ENCODE measurements at regions of chr2 and their contacts with region 1.

Region 1: GRCh38 chr2:176454893-176455811 is 185.9 kb downstream of the MTX2 start:
- DNase-seq: peak; percentile 69
- ATAC-seq: peak; percentile 47

Region 2: GRCh38 chr2:176140513-176141317 is 314.4 kb before region 1 on chr2:
- intact Hi-C with region 1: loop called (anchors 1 kb)
- DNase-seq: no peak
- ATAC-seq: peak; percentile 83

Region 3: GRCh38 chr2:176269319-176270099 is 185.6 kb before region 1 on chr2 and contains the start of gene MTX2:
- intact Hi-C with region 1: loop called (anchors 10 kb)
- DNase-seq: peak; percentile 89
- ATAC-seq: peak; percentile 99
- total RNA-seq, gene MTX2: 51.0 TPM

Region 4: GRCh38 chr2:176490061-176490861 is 35.1 kb after region 1 on chr2:
- intact Hi-C with region 1: no loop called
- DNase-seq: peak; percentile 71
- ATAC-seq: peak; percentile 79

Region 5: DNA sequence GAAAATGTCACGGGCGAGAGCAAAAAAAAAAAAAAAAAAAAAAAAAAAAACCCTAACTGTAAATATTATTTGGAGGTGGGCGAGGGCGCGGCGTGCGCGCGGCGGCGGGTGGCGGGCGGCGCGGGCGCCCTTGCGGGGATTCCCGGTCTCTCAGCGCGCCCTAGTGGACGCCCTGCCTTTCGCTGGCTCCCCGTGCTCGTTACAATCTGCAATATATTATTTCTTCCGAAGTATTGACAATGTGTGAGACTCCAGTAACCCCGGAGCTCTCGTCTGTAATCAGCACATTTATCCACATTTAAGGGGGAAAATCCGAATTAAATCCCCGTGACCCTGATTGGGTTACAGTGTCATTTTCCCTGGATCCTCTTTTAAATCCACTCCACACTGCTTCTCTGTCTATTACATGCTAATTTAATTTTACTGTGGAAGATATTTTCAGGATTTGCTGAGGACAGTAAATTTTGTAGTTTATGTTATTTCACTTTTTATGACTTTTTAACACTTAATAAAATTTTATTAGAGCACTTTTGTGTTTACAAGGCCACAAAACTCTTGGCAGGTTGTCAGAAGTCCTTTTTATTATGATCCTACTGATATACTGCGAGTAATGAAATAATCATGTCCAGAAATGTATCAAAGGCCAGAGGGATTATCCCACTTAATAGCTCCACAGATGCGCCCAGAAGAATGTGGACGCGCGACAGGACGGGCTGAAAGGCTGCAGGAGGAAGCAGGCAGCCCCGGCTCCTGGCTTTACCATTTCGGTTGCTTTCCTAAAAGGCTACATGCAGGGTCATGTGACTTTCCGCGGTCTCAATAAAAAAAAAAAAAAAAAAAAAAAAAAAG is 183.2 kb after region 1 on chr2:
- intact Hi-C with region 1: loop called (anchors 5 kb)
- DNase-seq: peak; percentile 76
- ATAC-seq: peak; percentile 91

Measured in Right ventricle myocardium inferior (tissue), 1 donor.